ENCODE measurements at regions of chr19 and their contacts with region 1.

Region 1: DNA sequence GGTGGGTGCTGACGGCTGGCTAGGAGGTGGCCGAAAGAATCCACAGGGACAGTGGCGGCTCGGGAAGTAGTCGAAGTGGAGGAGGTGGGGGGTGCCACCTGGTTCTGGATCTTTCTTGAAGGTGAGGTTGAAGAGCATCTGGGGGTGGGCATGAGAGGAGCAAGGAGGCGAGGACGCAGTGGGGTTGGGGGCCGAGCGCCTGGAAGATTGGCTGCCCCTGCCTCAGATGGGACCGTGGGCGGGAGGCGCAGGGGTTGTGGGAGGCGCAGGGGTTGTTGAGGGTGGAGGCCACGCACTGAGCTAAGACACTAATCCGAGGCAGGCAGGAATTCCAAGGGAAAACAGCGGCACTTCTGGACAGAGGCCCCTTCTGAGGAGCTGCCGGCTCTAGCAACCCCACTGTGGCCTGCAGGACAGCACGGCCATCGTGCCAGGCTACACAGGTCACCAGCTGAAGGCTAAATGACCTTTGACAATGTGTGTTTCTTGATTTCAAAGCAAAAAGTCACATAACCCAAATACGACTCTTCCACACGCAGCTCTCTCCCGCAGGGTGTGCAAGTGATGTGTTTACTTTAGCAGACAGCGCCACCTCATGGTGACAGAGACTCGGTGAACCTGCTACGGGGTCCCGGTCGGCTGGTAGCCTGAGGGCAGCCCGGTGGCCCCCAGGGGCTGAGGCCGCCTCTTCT is 44.1 kb upstream of the RANBP3 start:
- DNase-seq: peak; percentile 93
- ATAC-seq: peak; percentile 89
- H3K4me3 Mint-ChIP-seq: no peak overlapping the region
- H3K27ac Mint-ChIP-seq: no peak overlapping the region
- H3K4me1 Mint-ChIP-seq: 0 out of 2 replicates have a peak, but pooled peaks cover 6% of the 10 kb centered on the region
- H3K27me3 Mint-ChIP-seq: peaks cover 12% of the 10 kb centered on the region
- CTCF ChIP-seq: peak; percentile 80

Region 2: DNA sequence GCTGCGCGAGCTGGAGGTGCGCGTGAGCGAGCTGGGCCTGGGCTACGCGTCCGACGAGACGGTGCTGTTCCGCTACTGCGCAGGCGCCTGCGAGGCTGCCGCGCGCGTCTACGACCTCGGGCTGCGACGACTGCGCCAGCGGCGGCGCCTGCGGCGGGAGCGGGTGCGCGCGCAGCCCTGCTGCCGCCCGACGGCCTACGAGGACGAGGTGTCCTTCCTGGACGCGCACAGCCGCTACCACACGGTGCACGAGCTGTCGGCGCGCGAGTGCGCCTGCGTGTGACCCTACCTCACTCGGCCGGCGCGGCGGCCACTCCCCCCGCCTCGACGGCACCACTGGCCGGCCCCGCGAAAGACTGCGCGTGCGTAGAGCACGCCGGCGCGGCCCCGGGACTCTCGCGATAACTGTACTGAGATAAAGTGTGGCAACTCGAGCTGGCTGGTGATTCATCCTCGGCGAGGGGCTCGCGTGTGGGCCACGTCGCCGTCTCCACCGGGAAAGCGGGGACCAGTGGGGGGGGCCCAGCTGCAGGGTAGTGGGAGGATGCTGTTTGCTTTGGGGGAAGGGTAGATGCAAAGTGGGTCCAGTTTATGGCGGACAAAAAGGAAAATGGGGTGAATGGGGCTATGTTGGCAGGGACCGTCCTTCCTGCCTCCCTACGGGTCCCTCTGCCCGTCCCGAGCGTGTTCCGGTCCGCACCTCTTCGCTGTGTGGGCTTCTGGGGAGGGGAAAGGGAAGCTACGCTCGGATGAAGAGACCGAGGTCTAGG is 193.9 kb before region 1 on chr19:
- CTCF ChIA-PET with region 1: interaction called, 12 read pairs
- POLR2A ChIA-PET with region 1: interaction called, 3 read pairs
- DNase-seq: peak; percentile 93
- ATAC-seq: peak; percentile 75
- H3K4me3 Mint-ChIP-seq: peak overlapping the region; percentile 91
- H3K27ac Mint-ChIP-seq: peak overlapping the region; percentile 97
- H3K4me1 Mint-ChIP-seq: peaks cover 6% of the 10 kb centered on the region
- H3K27me3 Mint-ChIP-seq: no peaks in the 10 kb centered on the region; the same call in none of the 2 replicates
- CTCF ChIP-seq: no peak

Region 3: DNA sequence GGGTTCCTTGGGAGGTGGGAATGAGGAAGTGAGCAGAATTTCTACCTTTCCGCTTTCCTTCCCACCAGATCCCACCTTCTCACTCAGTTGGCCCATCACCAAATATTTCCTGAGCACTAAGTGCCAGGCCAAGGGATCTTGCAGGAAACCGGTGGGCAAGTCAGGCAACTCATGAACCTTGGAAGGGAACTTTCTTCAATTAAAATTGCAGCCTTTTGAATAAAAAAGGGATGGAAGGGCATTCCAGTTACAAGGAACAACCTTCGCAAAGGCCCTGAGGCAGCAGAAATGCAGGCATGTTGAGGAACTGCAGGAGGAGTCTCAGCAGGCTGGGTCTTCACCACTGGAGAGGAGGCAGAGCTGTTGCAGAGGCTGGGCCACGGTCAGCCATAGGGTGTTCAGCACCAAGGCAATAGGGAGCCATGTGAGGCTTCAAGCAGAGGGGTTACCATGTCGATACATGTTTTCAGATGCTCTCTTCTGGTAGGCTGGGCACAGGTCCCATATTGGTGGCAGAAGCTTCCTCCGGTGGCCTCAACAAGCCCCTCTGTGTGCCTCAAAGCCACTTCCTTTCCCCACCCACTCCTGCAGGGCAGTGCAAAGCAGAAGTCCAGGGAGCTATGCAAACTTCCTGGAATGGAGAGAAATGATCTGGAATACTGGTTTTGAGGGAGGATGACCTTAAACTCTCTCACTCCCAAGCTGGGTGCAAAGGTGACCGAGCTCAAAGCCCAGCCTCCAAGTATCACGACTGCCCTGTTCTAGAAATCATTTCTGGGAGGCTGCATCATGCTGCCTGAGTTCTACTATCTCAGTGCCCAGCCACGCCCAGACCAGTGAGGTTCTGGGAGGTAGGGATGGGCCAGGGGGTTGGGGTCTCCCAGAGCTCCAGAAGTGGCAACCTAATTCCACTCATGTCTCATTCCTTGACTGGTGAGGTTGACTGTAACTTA is 182.7 kb before region 1 on chr19 and contains the start of gene FUT6:
- CTCF ChIA-PET with region 1: no interaction called
- POLR2A ChIA-PET with region 1: no interaction called
- DNase-seq: no peak
- ATAC-seq: no peak
- H3K4me3 Mint-ChIP-seq: no peak within 1 kb of the TSS
- H3K27ac Mint-ChIP-seq: no peak within 1 kb of the TSS
- H3K4me1 Mint-ChIP-seq: no peaks in the 10 kb centered on the region
- H3K27me3 Mint-ChIP-seq: peaks cover 18% of the 10 kb centered on the region
- CTCF ChIP-seq: no peak
- total RNA-seq, gene FUT6: not detected in 3 replicates

Region 4: GRCh38 chr19:5967994-5968430 is 54.0 kb before region 1 on chr19:
- CTCF ChIA-PET with region 1: interaction called, 43 read pairs
- POLR2A ChIA-PET with region 1: interaction called, 4 read pairs
- DNase-seq: peak; percentile 77
- ATAC-seq: peak; percentile 70
- H3K4me3 Mint-ChIP-seq: peak overlapping the region; percentile 18
- H3K27ac Mint-ChIP-seq: peak overlapping the region; percentile 97
- H3K4me1 Mint-ChIP-seq: peaks cover 50% of the 10 kb centered on the region
- H3K27me3 Mint-ChIP-seq: no peaks in the 10 kb centered on the region
- CTCF ChIP-seq: peak; percentile 63

Region 5: GRCh38 chr19:5997371-5997770 is 24.7 kb before region 1 on chr19:
- CTCF ChIA-PET with region 1: interaction called, 245 read pairs
- POLR2A ChIA-PET with region 1: interaction called, 3 read pairs
- DNase-seq: peak; percentile 64
- ATAC-seq: peak; percentile 69
- H3K4me3 Mint-ChIP-seq: no peak overlapping the region
- H3K27ac Mint-ChIP-seq: no peak overlapping the region
- H3K4me1 Mint-ChIP-seq: no peaks in the 10 kb centered on the region
- H3K27me3 Mint-ChIP-seq: no peaks in the 10 kb centered on the region
- CTCF ChIP-seq: peak; percentile 28

Region 6: GRCh38 chr19:6048808-6049405 is 26.9 kb after region 1 on chr19:
- CTCF ChIA-PET with region 1: interaction called, 23 read pairs
- POLR2A ChIA-PET with region 1: no interaction called
- DNase-seq: peak; percentile 78
- ATAC-seq: peak; percentile 93
- H3K4me3 Mint-ChIP-seq: no peak overlapping the region
- H3K27ac Mint-ChIP-seq: no peak overlapping the region
- H3K4me1 Mint-ChIP-seq: peaks cover 12% of the 10 kb centered on the region; the same call in 1 of the 2 replicates
- H3K27me3 Mint-ChIP-seq: peaks cover 6% of the 10 kb centered on the region; the same call in 1 of the 2 replicates
- CTCF ChIP-seq: peak; percentile 75

Region 7: GRCh38 chr19:6460101-6460853 is 438.3 kb after region 1 on chr19:
- CTCF ChIA-PET with region 1: no interaction called
- POLR2A ChIA-PET with region 1: interaction called, 13 read pairs
- DNase-seq: peak; percentile 97
- ATAC-seq: peak; percentile 71
- H3K4me3 Mint-ChIP-seq: peak overlapping the region; percentile 98
- H3K27ac Mint-ChIP-seq: peak overlapping the region; percentile 99
- H3K4me1 Mint-ChIP-seq: peaks cover 19% of the 10 kb centered on the region
- H3K27me3 Mint-ChIP-seq: peaks cover 13% of the 10 kb centered on the region
- CTCF ChIP-seq: peak; percentile 50

Measured in WTC11 (cell line).